A549 (cell line): ENCODE measurements at regions of chr10 and their contacts with region 1.

Region 1: GRCh38 chr10:99484603-99485581 is 47.9 kb upstream of the NKX2-3 start:
- DNase-seq: peak; percentile 17 to 18
- ATAC-seq: peak; percentile 81 to 84
- H3K4me3 ChIP-seq: no peak overlapping the region
- H3K27ac ChIP-seq: no peak overlapping the region
- H3K4me1 ChIP-seq: no peaks in the 10 kb centered on the region
- CTCF ChIP-seq: peak; percentile 46
- EP300 ChIP-seq: no peak
- POLR2A ChIP-seq: no peak
- RAD21 ChIP-seq: peak; percentile 45 to 52; a peak in 4 of 5 replicates

Region 2: DNA sequence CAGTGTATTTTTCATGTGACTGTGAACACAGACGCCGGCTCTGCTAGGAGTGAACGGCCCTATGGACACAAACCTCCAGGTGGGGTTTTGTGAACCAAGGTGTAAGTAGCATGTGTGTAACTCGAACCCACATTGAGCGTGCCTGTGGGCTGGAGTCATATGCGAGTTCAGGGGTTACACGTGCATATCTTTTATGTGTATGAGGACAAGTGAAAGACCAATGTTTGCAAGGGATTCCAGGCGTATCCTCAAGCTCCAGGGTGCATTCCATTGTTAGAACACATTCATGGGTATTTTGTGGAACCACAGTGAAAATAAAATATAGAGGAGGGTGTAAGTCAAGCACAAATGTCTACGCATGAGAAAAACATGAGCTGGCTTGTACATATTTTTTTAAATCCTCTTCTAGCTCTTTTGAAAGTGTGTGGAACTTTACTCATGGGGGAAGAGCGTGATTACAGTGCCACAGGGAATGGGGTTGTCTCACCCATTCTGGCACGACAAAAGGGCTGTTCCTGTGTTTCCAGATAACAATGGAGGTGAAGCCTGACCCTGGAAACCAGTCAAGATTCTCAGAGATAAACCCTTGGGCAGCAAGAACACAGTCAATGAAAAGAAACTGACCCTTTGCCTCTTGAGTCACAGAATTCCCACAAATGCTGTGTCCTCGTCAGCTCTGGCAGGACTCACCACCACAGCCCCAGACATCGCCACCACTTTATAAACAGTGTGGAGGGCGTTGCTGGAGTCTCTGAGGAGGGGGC is 17.5 kb before region 1 on chr10:
- CTCF ChIA-PET with region 1: interaction called, 13 read pairs
- POLR2A ChIA-PET with region 1: no interaction called
- DNase-seq: no peak
- ATAC-seq: no peak
- H3K4me3 ChIP-seq: no peak overlapping the region
- H3K27ac ChIP-seq: no peak overlapping the region
- H3K4me1 ChIP-seq: peaks cover 12% of the 10 kb centered on the region
- CTCF ChIP-seq: no peak
- EP300 ChIP-seq: no peak
- POLR2A ChIP-seq: no peak
- RAD21 ChIP-seq: no peak

Region 3: DNA sequence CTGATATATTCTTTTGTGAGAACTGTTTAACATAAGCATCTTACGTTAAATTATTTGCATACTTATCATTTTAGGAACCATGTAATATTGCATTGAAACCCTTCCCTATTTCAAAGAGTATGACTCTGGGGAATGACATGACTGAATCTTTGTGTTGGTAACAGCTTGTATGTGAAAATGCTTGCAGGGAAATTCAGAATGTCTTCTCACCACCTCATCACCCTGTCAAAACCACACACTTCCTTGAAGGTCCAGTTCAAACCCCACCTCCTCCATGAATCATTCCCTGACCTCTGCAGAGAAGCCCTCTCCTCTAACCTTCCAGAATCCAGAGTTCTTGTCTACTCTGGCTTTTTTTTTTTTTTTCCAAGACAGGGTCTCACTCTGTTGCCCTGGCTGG is 21.5 kb after region 1 on chr10:
- CTCF ChIA-PET with region 1: interaction called, 17 read pairs
- POLR2A ChIA-PET with region 1: no interaction called
- DNase-seq: no peak
- ATAC-seq: no peak
- H3K4me3 ChIP-seq: no peak overlapping the region
- H3K27ac ChIP-seq: no peak overlapping the region
- H3K4me1 ChIP-seq: no peaks in the 10 kb centered on the region
- CTCF ChIP-seq: no peak
- EP300 ChIP-seq: no peak
- POLR2A ChIP-seq: no peak
- RAD21 ChIP-seq: no peak

Region 4: DNA sequence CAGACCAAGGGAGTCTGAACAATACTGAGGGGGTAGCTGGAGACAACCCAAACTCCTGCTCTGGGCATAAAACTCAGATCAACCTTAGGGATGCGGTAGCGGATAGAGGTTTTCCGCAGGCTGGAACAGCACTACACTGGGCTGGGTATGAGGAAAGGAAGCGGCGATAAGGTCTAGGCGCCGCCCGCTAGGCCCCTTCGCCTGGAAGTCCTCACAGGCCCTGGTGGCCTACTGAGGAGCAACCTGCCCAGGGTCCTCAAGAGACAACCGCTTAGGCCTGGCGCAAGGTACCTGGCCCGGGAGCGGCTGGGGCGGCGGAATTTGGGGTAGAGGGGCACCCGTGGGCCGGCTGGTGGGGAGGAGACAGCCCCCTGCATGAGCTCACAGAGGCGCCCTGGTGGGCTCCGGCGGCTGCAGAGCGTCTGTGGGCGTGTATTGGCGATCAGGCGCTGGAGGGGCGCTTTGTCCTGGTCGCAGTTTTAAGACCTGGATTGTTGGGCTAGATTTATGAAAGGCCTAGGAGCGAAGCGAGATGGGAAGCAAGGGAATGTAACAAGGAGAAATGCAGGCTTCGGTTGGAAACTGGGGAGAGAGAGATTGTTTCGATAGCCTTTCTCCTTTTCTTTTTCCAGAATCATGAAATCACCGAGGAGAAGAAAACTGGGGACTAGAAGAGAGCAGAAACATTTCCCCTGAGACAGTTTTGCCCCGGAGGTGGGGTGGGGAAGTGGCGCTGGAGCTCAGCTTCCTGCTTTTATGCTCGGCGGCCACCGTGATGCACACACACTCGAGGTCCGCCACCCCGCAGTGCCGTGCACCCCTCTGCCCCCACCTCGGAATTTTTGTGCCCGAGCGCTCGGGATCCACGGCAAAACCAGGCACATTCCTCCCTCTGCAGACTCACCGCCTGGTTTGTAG is 45.5 kb after region 1 on chr10:
- CTCF ChIA-PET with region 1: no interaction called
- POLR2A ChIA-PET with region 1: no interaction called
- DNase-seq: no peak
- ATAC-seq: no peak
- H3K4me3 ChIP-seq: no peak overlapping the region
- H3K27ac ChIP-seq: no peak overlapping the region
- H3K4me1 ChIP-seq: 0 out of 3 replicates have a peak, but pooled peaks cover 3% of the 10 kb centered on the region
- CTCF ChIP-seq: no peak
- EP300 ChIP-seq: no peak
- POLR2A ChIP-seq: no peak
- RAD21 ChIP-seq: no peak